ENCODE measurements at regions of chr9 and their contacts with region 1.

Region 1: DNA sequence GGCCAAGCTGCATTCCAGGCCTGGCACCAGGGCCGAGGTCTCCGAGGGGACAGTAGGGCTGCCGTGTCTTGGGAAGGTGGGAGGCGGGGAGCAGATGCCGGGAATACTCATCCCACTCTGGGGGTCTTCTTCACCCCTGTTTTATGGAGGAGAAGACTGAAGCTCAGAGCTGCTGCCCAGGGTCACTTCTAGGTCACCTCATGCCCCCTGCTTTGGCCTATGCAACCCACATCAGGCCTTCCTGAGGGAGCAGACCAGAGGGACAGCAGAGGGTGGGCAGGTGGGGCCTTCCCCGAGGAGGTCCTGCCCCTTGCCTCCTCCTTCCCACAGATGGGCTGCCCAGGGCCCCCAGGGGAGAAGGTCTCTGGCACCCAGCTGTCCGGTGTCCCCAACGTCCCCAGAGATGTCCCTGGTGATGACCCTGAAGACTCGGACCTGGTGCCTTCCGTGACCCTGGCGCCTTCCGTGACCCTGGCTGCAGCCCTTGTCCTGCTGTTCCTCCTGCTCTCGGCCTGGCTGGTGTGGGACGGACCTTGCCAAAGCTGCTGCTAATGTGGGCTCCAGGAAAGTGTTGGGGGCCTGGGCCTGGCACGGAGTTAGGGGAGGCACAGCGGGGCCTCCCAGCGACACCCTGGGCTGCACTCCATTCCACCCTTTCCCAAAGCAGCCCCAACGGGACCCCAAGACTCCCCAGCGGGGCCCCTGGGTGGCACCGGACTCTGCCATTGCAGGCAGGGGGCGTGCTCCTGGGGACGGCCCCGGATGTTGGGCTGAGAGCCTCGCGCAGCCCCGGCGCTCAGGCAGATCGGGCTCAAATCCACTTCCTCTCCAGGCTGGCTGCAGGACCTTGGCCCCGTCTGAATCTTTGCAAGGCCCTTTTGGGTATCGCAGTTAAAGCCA is 6.7 kb upstream of the SLC2A6 start:
- DNase-seq: peak in 1 of 2 experiments; percentile 37
- ATAC-seq: peak; percentile 53 to 73; a peak in 4 of 6 replicates
- H3K4me3 ChIP-seq: no peak overlapping the region
- H3K27ac ChIP-seq: 0 out of 6 replicates have a peak overlapping the region, but pooled peaks of 1 of the 2 experiments have one; percentile 38
- H3K4me1 ChIP-seq: 0 out of 3 replicates have a peak, but pooled peaks cover 3% of the 10 kb centered on the region
- CTCF ChIP-seq: no peak
- EP300 ChIP-seq: no peak
- POLR2A ChIP-seq: no peak
- RAD21 ChIP-seq: no peak

Region 2: GRCh38 chr9:133356391-133357091 is 129.1 kb before region 1 on chr9 and contains the starts of genes SURF1 and SURF2:
- CTCF ChIA-PET with region 1: interaction called, 23 read pairs
- POLR2A ChIA-PET with region 1: interaction called, 3 read pairs
- DNase-seq: peak; percentile 76 to 81
- ATAC-seq: peak; percentile 69 to 80
- H3K4me3 ChIP-seq: peak within 1 kb of the TSS; percentile 64
- H3K27ac ChIP-seq: peak within 1 kb of the TSS; percentile 82 to 94
- H3K4me1 ChIP-seq: peaks cover 14% of the 10 kb centered on the region; the same call in 1 of the 3 replicates
- CTCF ChIP-seq: no peak
- EP300 ChIP-seq: no peak
- POLR2A ChIP-seq: peak; percentile 88
- RAD21 ChIP-seq: no peak
- polyA plus RNA-seq, gene SURF1: 47.5 and 63.0 TPM in 2 replicates
- polyA plus RNA-seq, gene SURF2: 15.4 and 25.2 TPM in 2 replicates

Region 3: DNA sequence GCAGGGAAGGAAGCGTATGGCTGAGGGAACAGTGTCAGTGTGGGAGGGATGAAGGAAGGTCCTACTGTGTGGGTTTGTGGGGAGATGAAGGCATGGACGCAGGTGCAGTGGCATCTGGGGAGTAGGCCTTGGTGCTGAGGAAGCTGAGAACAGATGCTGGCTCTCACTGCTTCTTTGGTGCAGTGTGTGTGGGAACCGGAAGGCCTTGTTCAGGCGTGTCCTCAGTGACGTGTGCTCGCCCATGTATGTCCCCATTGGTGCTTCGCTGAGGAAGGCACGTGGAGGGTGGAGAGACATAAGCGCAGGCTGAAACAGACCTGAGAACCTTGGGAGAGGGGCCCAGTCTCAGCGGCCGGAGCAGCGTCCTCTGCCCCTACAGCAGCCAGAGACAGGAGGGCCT is 44.7 kb before region 1 on chr9:
- CTCF ChIA-PET with region 1: interaction called, 14 read pairs
- POLR2A ChIA-PET with region 1: no interaction called
- DNase-seq: no peak
- ATAC-seq: no peak
- H3K4me3 ChIP-seq: no peak overlapping the region
- H3K27ac ChIP-seq: no peak overlapping the region
- H3K4me1 ChIP-seq: no peaks in the 10 kb centered on the region
- CTCF ChIP-seq: no peak
- EP300 ChIP-seq: no peak
- POLR2A ChIP-seq: no peak
- RAD21 ChIP-seq: no peak

Region 4: GRCh38 chr9:133499132-133499891 is 13.7 kb after region 1 on chr9:
- CTCF ChIA-PET with region 1: interaction called, 42 read pairs
- POLR2A ChIA-PET with region 1: no interaction called
- DNase-seq: no peak
- ATAC-seq: peak; percentile 51 to 62; a peak in 4 of 6 replicates
- H3K4me3 ChIP-seq: no peak overlapping the region
- H3K27ac ChIP-seq: no peak overlapping the region
- H3K4me1 ChIP-seq: no peaks in the 10 kb centered on the region
- CTCF ChIP-seq: no peak
- EP300 ChIP-seq: no peak
- POLR2A ChIP-seq: no peak
- RAD21 ChIP-seq: no peak